Panc1 (cell line): ENCODE measurements at regions of chr4 and their contacts with region 1.

Region 1: GRCh38 chr4:162163852-162164759 is at the start of gene FSTL5:
- DNase-seq: no peak
- ATAC-seq: peak; percentile 87
- H3K4me3 ChIP-seq: peak within 1 kb of the TSS; percentile 40 to 54
- H3K27ac ChIP-seq: no peak within 1 kb of the TSS
- H3K4me1 ChIP-seq: no peaks in the 10 kb centered on the region
- H3K27me3 ChIP-seq: no peaks in the 10 kb centered on the region
- CTCF ChIP-seq: no peak
- total RNA-seq, gene FSTL5: 0.67 TPM

Region 2: GRCh38 chr4:161252520-161253141 is 911.5 kb before region 1 on chr4:
- CTCF ChIA-PET with region 1: no interaction called
- POLR2A ChIA-PET with region 1: no interaction called
- in situ Hi-C with region 1: no loop called
- intact Hi-C with region 1: loop called (anchors 10 kb)
- DNase-seq: peak; percentile 33
- ATAC-seq: no peak
- H3K4me3 ChIP-seq: no peak overlapping the region
- H3K27ac ChIP-seq: no peak overlapping the region
- H3K4me1 ChIP-seq: no peaks in the 10 kb centered on the region
- H3K27me3 ChIP-seq: no peaks in the 10 kb centered on the region
- CTCF ChIP-seq: peak; percentile 72

Region 3: DNA sequence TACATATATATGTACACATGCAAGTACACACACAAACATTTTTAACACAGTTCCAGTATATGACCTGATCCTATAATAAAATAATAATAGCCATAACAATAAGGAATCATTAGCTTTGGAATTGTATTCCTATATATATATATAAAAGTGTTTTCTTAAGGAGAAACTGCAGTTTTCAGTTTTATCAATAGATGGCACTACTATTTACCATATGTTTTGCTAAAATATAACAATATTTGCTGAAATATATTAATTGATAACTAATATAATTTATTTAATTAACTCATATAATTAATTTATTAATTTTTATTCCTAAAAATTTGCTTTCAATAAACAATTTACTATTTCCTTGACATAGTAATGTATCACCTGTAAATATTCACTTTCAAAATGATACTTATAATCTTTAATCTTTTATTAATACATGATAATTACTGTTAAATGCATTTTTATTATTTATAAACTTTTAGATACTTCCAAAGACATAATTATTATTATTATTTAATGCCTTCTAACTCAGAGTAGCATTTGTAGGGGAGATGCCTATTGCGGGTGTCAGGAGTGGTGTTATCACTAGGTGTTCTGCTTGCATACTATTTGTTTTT is 599.8 kb before region 1 on chr4:
- CTCF ChIA-PET with region 1: no interaction called
- POLR2A ChIA-PET with region 1: no interaction called
- in situ Hi-C with region 1: no loop called
- intact Hi-C with region 1: loop called (anchors 5 kb)
- DNase-seq: no peak
- ATAC-seq: no peak
- H3K4me3 ChIP-seq: no peak overlapping the region
- H3K27ac ChIP-seq: no peak overlapping the region
- H3K4me1 ChIP-seq: no peaks in the 10 kb centered on the region
- H3K27me3 ChIP-seq: no peaks in the 10 kb centered on the region
- CTCF ChIP-seq: no peak

Region 4: GRCh38 chr4:162090628-162091027 is 73.5 kb before region 1 on chr4:
- CTCF ChIA-PET with region 1: no interaction called
- POLR2A ChIA-PET with region 1: no interaction called
- in situ Hi-C with region 1: no loop called
- intact Hi-C with region 1: no loop called
- DNase-seq: no peak
- ATAC-seq: no peak
- H3K4me3 ChIP-seq: no peak overlapping the region
- H3K27ac ChIP-seq: no peak overlapping the region
- H3K4me1 ChIP-seq: no peaks in the 10 kb centered on the region
- H3K27me3 ChIP-seq: no peaks in the 10 kb centered on the region
- CTCF ChIP-seq: no peak

Region 5: GRCh38 chr4:162341533-162341932 is 177.4 kb after region 1 on chr4:
- CTCF ChIA-PET with region 1: no interaction called
- POLR2A ChIA-PET with region 1: no interaction called
- in situ Hi-C with region 1: no loop called
- intact Hi-C with region 1: no loop called
- DNase-seq: no peak
- ATAC-seq: no peak
- H3K4me3 ChIP-seq: no peak overlapping the region
- H3K27ac ChIP-seq: no peak overlapping the region
- H3K4me1 ChIP-seq: no peaks in the 10 kb centered on the region
- H3K27me3 ChIP-seq: no peaks in the 10 kb centered on the region
- CTCF ChIP-seq: no peak